A673 (cell line): ENCODE measurements at regions of chr9 and their contacts with region 1.

Region 1: DNA sequence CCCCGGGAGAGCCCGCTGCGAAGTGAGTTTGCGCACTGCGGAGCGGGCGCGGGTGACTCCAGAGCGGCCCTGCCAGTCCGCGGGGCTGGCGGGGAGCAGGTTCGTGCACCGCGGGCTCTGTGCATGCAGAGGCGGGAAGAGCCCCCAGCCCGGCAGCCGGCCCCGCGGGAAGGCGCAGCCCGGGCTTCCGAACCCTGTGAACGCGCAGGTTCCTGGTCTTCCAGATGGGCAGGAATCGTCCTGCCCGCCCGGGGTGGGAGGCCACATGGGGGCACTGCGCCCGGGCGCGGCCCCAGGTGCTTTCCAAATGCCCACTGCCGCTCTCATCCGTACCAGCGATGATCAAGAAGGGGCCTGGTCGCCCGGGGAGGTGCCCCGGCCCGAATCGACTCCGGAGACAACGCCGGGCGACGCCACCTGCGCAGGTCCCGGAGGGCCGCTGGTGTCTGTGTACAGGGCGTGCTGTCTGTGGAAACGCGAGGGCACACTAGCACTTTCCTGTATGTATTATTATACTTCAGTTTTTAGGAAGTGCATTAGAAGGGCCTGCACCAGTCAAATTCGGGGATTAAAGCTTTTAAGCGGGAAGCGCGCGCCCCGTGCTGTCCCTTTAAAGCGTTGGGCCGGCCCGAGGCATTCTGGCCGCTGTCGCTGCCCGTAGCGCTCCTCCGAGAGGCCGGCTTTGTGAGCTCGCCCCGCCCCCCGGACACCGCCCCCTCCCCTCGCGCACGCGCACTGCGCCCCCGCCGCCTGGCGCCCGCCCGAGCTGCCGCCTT is at the start of gene WDR5:
- DNase-seq: peak; percentile 94
- H3K4me3 ChIP-seq: peak within 1 kb of the TSS; percentile 100
- H3K27ac ChIP-seq: peak within 1 kb of the TSS; percentile 98
- H3K4me1 ChIP-seq: peaks cover 36% of the 10 kb centered on the region
- H3K27me3 ChIP-seq: no peaks in the 10 kb centered on the region
- CTCF ChIP-seq: peak; percentile 33; the same call in 1 of the 2 replicates
- total RNA-seq, gene WDR5: 67.7 and 76.4 TPM in 2 replicates

Region 2: GRCh38 chr9:133170716-133171559 is 964.6 kb before region 1 on chr9:
- CTCF ChIA-PET with region 1: no interaction called
- POLR2A ChIA-PET with region 1: interaction called, 14 read pairs
- intact Hi-C with region 1: no loop called
- DNase-seq: no peak
- H3K4me3 ChIP-seq: no peak overlapping the region
- H3K27ac ChIP-seq: no peak overlapping the region
- H3K4me1 ChIP-seq: no peaks in the 10 kb centered on the region
- H3K27me3 ChIP-seq: peaks cover 10% of the 10 kb centered on the region
- CTCF ChIP-seq: no peak

Region 3: GRCh38 chr9:134150557-134151214 is 15.2 kb after region 1 on chr9:
- CTCF ChIA-PET with region 1: no interaction called
- POLR2A ChIA-PET with region 1: interaction called, 13 read pairs
- intact Hi-C with region 1: no loop called
- DNase-seq: no peak
- H3K4me3 ChIP-seq: no peak overlapping the region
- H3K27ac ChIP-seq: no peak overlapping the region
- H3K4me1 ChIP-seq: no peaks in the 10 kb centered on the region
- H3K27me3 ChIP-seq: no peaks in the 10 kb centered on the region
- CTCF ChIP-seq: no peak